HCT116 (cell line): ENCODE measurements at regions of chr5 and their contacts with region 1.

Region 1: GRCh38 chr5:127492854-127493738 is 24.3 kb upstream of the PRRC1 start:
- DNase-seq: peak; percentile 54
- ATAC-seq: peak; percentile 74
- H3K4me3 ChIP-seq: no peak overlapping the region
- H3K27ac ChIP-seq: no peak overlapping the region
- H3K4me1 ChIP-seq: no peaks in the 10 kb centered on the region
- H3K27me3 ChIP-seq: no peaks in the 10 kb centered on the region
- CTCF ChIP-seq: peak; percentile 60 to 98 (median 91)
- POLR2A ChIP-seq: no peak
- RAD21 ChIP-seq: no peak; the same call in none of the 2 replicates

Region 2: DNA sequence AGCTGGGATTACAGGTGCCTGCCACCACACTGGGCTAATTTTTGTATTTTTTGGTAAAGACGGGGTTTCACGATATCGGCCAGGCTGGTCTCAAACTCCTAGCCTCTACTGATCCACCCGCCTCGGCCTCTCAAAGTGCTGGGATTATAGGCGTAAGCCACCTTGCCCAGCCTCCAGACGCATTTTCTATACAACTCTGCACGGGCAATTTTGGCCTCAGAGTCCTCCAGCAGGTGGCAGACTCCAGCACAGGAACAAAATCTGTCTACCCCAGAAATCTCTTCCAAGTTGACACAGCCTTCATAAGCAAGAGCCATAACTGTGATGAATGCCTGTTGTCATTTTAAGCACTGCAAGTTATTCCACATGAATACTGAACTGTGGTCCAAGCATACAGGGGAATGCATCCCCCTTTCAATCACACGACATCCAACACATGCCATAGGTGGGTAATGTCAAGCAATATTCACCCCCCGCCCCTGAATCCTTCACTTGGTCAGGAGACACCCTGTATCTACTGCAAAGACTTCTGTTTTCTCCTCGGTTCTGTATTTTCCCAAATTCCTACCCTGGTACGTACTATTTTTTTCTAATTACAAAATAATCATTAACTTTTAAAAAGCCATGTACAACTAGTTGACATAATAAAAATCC is 948.9 kb before region 1 on chr5:
- CTCF ChIA-PET with region 1: interaction called, 5 read pairs
- POLR2A ChIA-PET with region 1: no interaction called
- RAD21 ChIA-PET with region 1: no interaction called
- intact Hi-C with region 1: loop called (anchors 5 kb)
- DNase-seq: peak; percentile 19
- ATAC-seq: peak; percentile 79
- H3K4me3 ChIP-seq: no peak overlapping the region
- H3K27ac ChIP-seq: no peak overlapping the region
- H3K4me1 ChIP-seq: no peaks in the 10 kb centered on the region
- H3K27me3 ChIP-seq: no peaks in the 10 kb centered on the region
- CTCF ChIP-seq: peak; percentile 63 to 76 (median 68); a peak in 5 of 6 replicates
- POLR2A ChIP-seq: no peak
- RAD21 ChIP-seq: peak; percentile 56

Region 3: GRCh38 chr5:126837906-126838539 is 655.1 kb before region 1 on chr5:
- CTCF ChIA-PET with region 1: interaction called, 11 read pairs
- POLR2A ChIA-PET with region 1: no interaction called
- RAD21 ChIA-PET with region 1: no interaction called
- intact Hi-C with region 1: no loop called
- DNase-seq: no peak
- ATAC-seq: no peak
- H3K4me3 ChIP-seq: no peak overlapping the region
- H3K27ac ChIP-seq: no peak overlapping the region
- H3K4me1 ChIP-seq: no peaks in the 10 kb centered on the region
- H3K27me3 ChIP-seq: no peaks in the 10 kb centered on the region
- CTCF ChIP-seq: no peak
- POLR2A ChIP-seq: no peak
- RAD21 ChIP-seq: peak; percentile 28; the same call in 1 of the 2 replicates

Region 4: DNA sequence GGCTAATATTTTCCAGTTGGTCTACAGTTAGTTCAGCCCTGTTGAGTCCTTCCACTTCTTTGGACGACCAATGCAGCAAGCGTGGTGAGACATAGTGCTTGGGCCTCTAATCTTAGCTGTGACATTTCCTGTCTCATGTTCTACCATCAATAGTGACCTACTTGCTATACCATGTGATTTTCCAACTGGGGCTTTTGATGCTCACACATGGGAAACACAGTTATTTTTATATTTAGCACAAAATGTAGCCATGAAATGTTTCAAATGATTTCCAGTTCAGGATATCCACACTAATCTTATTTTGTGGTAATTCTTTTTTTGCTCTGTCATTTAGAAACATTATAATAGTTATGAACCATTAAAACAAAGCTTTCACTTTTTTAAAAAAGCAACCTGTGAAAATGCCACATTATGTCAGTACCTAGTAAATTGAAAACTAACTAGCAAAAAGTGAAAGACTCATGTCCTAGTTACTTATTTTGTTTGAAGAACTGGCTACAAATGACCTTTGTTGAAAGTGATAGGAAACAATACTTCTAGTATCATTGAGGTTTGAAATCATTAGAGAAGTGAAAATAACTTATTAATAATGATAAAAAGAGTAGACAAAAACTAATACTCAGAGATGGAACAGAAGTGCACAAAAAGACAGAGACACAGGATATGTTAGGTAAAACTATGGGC is 481.0 kb before region 1 on chr5:
- CTCF ChIA-PET with region 1: no interaction called
- POLR2A ChIA-PET with region 1: no interaction called
- RAD21 ChIA-PET with region 1: no interaction called
- intact Hi-C with region 1: no loop called
- DNase-seq: no peak
- ATAC-seq: no peak
- H3K4me3 ChIP-seq: no peak overlapping the region
- H3K27ac ChIP-seq: no peak overlapping the region
- H3K4me1 ChIP-seq: no peaks in the 10 kb centered on the region
- H3K27me3 ChIP-seq: no peaks in the 10 kb centered on the region
- CTCF ChIP-seq: no peak
- POLR2A ChIP-seq: no peak
- RAD21 ChIP-seq: no peak

Region 5: GRCh38 chr5:127471211-127471610 is 21.9 kb before region 1 on chr5:
- CTCF ChIA-PET with region 1: interaction called, 13 read pairs
- POLR2A ChIA-PET with region 1: no interaction called
- RAD21 ChIA-PET with region 1: no interaction called
- intact Hi-C with region 1: no loop called
- DNase-seq: no peak
- ATAC-seq: no peak
- H3K4me3 ChIP-seq: no peak overlapping the region
- H3K27ac ChIP-seq: no peak overlapping the region
- H3K4me1 ChIP-seq: no peaks in the 10 kb centered on the region
- H3K27me3 ChIP-seq: no peaks in the 10 kb centered on the region
- CTCF ChIP-seq: no peak
- POLR2A ChIP-seq: no peak
- RAD21 ChIP-seq: no peak

Region 6: DNA sequence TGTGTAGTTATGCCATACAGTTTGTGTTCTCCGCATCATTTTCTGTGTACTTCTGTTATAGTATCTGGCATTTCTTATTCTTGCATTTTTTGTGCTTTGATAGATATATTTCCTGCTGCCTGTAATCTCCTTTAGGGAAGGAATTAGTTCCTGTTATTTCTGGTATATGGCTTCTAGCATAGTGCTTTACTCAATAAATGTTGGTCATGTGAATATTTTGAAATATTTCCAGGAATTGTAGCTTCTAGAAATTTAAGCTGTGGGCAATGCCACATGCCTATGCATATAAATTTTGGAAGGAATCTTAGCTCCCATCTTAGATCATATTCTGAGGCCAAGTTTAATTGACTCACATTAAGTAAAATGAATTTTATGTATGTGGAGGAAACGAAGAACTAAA is 12.8 kb after region 1 on chr5:
- CTCF ChIA-PET with region 1: interaction called, 20 read pairs
- POLR2A ChIA-PET with region 1: no interaction called
- RAD21 ChIA-PET with region 1: no interaction called
- intact Hi-C with region 1: no loop called
- DNase-seq: no peak
- ATAC-seq: no peak
- H3K4me3 ChIP-seq: no peak overlapping the region
- H3K27ac ChIP-seq: no peak overlapping the region
- H3K4me1 ChIP-seq: no peaks in the 10 kb centered on the region
- H3K27me3 ChIP-seq: no peaks in the 10 kb centered on the region
- CTCF ChIP-seq: no peak
- POLR2A ChIP-seq: no peak
- RAD21 ChIP-seq: no peak

Region 7: DNA sequence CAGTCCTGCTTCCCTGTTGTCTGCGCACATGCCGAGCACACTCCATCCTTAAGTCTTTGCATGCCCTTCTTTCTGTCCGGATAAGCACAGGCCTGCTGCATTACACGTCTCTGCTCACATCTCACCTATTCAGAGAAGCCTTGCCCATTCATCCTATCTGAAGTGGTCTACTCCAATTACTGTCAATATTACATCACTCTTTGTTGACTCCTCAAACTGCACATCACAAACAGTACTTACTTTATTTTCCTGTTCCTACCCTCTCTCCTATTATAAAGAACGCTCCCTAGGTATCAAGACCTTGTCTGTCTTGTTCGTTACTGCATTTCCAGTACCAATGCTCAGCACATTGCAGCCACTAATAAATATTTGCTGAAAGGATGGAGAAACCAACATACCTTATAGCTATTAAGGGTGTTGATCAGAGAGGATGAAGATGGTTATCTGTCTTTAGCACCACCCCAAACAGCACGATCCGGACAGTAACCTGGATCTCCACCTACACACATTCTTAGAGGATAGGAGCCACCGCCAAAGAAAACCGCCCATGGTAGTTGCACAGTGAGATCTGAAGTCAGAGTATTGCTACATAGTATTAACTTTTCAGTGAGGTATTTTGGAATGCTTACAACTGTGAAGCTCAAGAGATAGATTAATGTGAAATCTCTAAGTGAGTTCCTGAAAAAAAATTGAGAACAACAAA is 22.7 kb after region 1 on chr5:
- CTCF ChIA-PET with region 1: interaction called, 10 read pairs
- POLR2A ChIA-PET with region 1: no interaction called
- RAD21 ChIA-PET with region 1: no interaction called
- intact Hi-C with region 1: no loop called
- DNase-seq: no peak
- ATAC-seq: no peak
- H3K4me3 ChIP-seq: no peak overlapping the region
- H3K27ac ChIP-seq: no peak overlapping the region
- H3K4me1 ChIP-seq: peaks cover 9 to 13% of the 10 kb centered on the region in 2 experiments; a peak in 3 of 4 replicates
- H3K27me3 ChIP-seq: no peaks in the 10 kb centered on the region
- CTCF ChIP-seq: no peak
- POLR2A ChIP-seq: no peak
- RAD21 ChIP-seq: no peak

Region 8: GRCh38 chr5:127785098-127785927 is 292.2 kb after region 1 on chr5:
- CTCF ChIA-PET with region 1: no interaction called
- POLR2A ChIA-PET with region 1: no interaction called
- RAD21 ChIA-PET with region 1: no interaction called
- intact Hi-C with region 1: no loop called
- DNase-seq: no peak
- ATAC-seq: no peak
- H3K4me3 ChIP-seq: no peak overlapping the region
- H3K27ac ChIP-seq: no peak overlapping the region
- H3K4me1 ChIP-seq: no peaks in the 10 kb centered on the region
- H3K27me3 ChIP-seq: no peaks in the 10 kb centered on the region
- CTCF ChIP-seq: no peak
- POLR2A ChIP-seq: no peak
- RAD21 ChIP-seq: no peak